ENCODE measurements at regions of chr20 and their contacts with region 1.

Region 1: GRCh38 chr20:45823949-45824835 is 2.9 kb downstream of the TNNC2 start:
- DNase-seq: peak; percentile 72
- H3K4me3 ChIP-seq: peak overlapping the region in 3 of 4 donors; percentile 6 to 44 (median 8)
- H3K27ac ChIP-seq: peak overlapping the region in 1 of 4 donors; percentile 69
- H3K4me1 ChIP-seq: peaks cover 4 to 42% (median 27%) of the 10 kb centered on the region in 4 donors
- H3K27me3 ChIP-seq: peaks cover 13% of the 10 kb centered on the region
- CTCF ChIP-seq: peak; percentile 43 to 61 (median 53)
- EP300 ChIP-seq: no peak
- POLR2A ChIP-seq: no peak

Region 2: GRCh38 chr20:45946149-45946970 is 122.2 kb after region 1 on chr20:
- in situ Hi-C with region 1: loop called in 2 of 4 experiments (anchors 10 to 25 kb)
- intact Hi-C with region 1: no loop called
- DNase-seq: peak; percentile 54
- H3K4me3 ChIP-seq: no peak overlapping the region
- H3K27ac ChIP-seq: peak overlapping the region in 3 of 4 donors; percentile 35 to 53 (median 51)
- H3K4me1 ChIP-seq: peaks cover 0 to 14% (median 0%) of the 10 kb centered on the region in 4 donors
- H3K27me3 ChIP-seq: no peaks in the 10 kb centered on the region
- CTCF ChIP-seq: no peak
- EP300 ChIP-seq: no peak
- POLR2A ChIP-seq: no peak

Region 3: GRCh38 chr20:46243707-46244628 is 419.8 kb after region 1 on chr20:
- in situ Hi-C with region 1: no loop called
- intact Hi-C with region 1: no loop called
- DNase-seq: no peak
- H3K4me3 ChIP-seq: no peak overlapping the region
- H3K27ac ChIP-seq: no peak overlapping the region
- H3K4me1 ChIP-seq: no peaks in the 10 kb centered on the region
- H3K27me3 ChIP-seq: peaks cover 49% of the 10 kb centered on the region
- CTCF ChIP-seq: no peak
- EP300 ChIP-seq: no peak
- POLR2A ChIP-seq: no peak